ENCODE measurements at regions of chr12 and their contacts with region 1.

Region 1: DNA sequence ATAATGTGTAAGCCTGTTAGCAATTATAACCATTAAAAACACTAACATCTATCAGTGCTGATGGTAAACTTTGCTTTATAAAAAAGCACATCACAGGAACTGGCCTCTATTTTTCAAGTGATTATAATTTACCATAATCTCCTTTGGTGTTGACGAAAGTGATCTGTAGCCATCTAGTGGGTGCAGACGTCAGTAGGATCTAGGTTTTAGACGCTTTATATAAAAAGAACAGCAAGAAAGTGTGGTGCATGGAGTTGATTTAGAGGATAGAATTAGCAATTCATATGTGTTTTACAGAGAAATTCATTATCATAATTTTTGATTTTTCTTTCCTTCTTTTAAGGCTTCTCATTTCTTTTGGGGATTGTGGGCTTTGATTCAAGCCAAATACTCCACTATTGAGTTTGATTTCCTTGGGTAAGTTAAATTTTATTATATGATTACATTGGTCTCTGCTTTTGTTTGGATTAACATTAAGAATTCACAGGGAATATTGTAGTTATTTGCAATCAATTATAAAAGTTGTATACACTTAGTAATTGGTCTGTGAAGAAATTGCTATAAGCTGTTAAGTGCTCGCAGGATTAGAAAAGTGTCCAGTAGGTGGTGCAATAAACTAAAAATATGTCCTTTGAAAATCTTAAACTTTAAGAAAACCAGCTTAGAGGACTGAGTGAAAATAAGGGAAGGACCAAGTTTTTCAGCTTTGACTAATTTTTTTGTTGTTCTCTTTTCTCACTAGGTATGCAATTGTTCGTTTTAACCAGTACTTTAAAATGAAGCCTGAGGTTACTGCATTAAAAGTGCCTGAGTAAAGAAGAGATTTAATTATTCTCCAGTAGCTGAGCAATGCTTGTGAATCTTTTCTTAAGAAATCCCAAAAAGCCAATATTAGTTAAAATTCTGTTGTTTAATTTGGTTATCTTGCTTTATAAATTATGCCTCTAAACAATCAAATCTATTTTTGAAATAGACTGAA is 59.5 kb downstream of the ETNK1 start:
- DNase-seq: no peak
- H3K4me3 ChIP-seq: no peak overlapping the region
- H3K27me3 ChIP-seq: no peaks in the 10 kb centered on the region
- CTCF ChIP-seq: peak; percentile 58

Region 2: GRCh38 chr12:22670762-22671161 is 13.7 kb before region 1 on chr12:
- CTCF ChIA-PET with region 1: interaction called, 14 read pairs
- POLR2A ChIA-PET with region 1: interaction called, 3 read pairs
- DNase-seq: no peak
- H3K4me3 ChIP-seq: no peak overlapping the region
- H3K27me3 ChIP-seq: no peaks in the 10 kb centered on the region
- CTCF ChIP-seq: peak; percentile 21; the same call in 1 of the 2 replicates

Measured in BJ (cell line).